ENCODE measurements at regions of chr14 and their contacts with region 1.

Region 1: DNA sequence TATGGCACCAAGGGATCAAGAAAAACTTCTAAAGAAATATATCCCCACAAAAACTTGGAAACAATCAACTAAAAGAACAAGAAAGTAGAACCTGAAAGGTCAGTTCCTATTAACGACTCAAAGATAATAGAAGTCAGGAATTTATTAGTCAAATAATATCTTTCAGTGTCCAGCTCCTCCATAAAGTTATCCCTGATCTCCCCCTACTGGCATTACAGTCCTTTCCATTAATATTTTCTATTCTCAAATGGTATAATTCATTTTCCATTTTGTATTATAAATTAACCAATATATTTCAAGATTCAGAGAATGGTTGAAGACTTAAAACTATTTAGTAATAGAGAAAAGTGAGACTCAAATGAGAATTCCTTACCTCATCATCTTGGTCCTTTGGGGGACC is 11.6 kb upstream of the SUPT16H start:
- DNase-seq: no peak
- ATAC-seq: no peak
- H3K4me3 ChIP-seq: no peak overlapping the region
- H3K27ac ChIP-seq: no peak overlapping the region
- H3K4me1 ChIP-seq: no peaks in the 10 kb centered on the region
- H3K27me3 ChIP-seq: no peaks in the 10 kb centered on the region
- CTCF ChIP-seq: peak in 1 of 4 donors; percentile 19
- POLR2A ChIP-seq: no peak

Region 2: DNA sequence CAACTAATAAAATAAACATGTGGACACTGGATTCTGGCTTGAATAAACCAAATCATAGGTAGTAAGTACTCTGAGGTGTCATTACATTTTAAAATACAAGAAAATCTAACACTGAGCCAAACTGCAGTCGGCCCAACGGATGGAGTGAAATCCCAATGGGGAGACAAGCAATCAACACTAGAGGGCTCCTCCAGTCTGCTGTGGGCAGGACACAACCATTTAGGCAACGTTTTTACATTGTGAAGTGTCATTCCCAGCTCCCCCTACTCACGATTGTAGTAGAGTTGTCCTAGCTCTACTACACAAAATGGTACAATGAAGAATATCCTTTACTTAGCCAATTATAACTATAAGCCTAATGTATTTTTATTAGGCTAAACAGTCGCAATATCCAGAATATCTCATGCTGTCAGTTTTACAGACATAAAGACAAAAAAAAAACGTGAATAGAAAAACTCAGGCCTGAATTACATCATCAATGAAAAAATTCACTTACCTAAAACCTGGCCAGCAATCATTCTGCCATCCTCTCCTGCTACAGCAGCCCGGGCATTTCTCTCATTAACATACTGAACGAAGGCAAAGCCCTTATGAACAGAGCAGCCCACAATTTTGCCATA is 161.9 kb before region 1 on chr14:
- intact Hi-C with region 1: loop called in 1 of 2 experiments (anchors 10 kb)
- DNase-seq: no peak
- ATAC-seq: peak; percentile 33 to 65 (median 50)
- H3K4me3 ChIP-seq: no peak overlapping the region
- H3K27ac ChIP-seq: no peak overlapping the region
- H3K4me1 ChIP-seq: peaks cover 0 to 15% (median 0%) of the 10 kb centered on the region in 4 donors
- H3K27me3 ChIP-seq: no peaks in the 10 kb centered on the region
- CTCF ChIP-seq: peak in 3 of 4 donors; percentile 30 to 35 (median 34)
- POLR2A ChIP-seq: no peak

Measured in right lobe of liver (tissue), 6 donors.